ENCODE measurements at regions of chr1 and their contacts with region 1.

Region 1: DNA sequence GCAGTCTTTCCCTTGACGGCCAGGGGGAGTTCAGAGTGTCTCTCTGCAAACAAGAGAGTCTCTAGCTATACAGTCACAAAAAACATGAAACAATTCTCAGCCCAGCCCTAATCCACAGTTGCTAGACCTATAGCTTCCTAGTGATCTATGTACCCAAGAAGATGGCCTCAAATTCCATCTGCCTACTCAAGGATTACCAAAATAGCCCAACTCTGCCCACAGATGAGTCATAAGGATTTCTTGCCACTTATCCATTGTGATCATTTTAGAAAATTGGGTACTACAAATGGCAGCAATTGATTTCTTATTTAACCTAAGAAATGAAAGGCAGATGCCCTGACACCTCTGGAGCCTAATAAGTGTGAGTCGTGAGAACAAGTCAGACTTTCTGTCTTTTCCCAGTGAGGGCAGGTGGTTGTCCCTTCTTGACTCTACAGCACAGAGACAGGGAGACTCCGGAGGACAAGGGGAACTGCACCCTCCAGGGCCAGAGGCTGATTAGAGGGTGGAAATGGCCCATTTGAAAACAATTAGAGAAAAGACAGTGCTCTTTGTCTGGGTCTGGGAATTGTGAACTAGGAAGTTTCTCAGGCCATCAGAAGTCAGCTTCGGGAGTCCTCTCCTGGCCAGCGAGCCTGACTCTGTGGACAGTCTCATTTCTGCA is 65.4 kb downstream of the ABCA4 start:
- DNase-seq: no peak
- H3K4me3 ChIP-seq: no peak overlapping the region
- H3K27ac ChIP-seq: no peak overlapping the region
- H3K4me1 ChIP-seq: no peaks in the 10 kb centered on the region
- H3K27me3 ChIP-seq: no peaks in the 10 kb centered on the region
- CTCF ChIP-seq: no peak
- POLR2A ChIP-seq: no peak

Region 2: GRCh38 chr1:93967306-93967705 is 88.3 kb before region 1 on chr1:
- intact Hi-C with region 1: no loop called
- DNase-seq: no peak
- H3K4me3 ChIP-seq: no peak overlapping the region
- H3K27ac ChIP-seq: no peak overlapping the region
- H3K4me1 ChIP-seq: no peaks in the 10 kb centered on the region
- H3K27me3 ChIP-seq: no peaks in the 10 kb centered on the region
- CTCF ChIP-seq: no peak
- POLR2A ChIP-seq: no peak

Region 3: DNA sequence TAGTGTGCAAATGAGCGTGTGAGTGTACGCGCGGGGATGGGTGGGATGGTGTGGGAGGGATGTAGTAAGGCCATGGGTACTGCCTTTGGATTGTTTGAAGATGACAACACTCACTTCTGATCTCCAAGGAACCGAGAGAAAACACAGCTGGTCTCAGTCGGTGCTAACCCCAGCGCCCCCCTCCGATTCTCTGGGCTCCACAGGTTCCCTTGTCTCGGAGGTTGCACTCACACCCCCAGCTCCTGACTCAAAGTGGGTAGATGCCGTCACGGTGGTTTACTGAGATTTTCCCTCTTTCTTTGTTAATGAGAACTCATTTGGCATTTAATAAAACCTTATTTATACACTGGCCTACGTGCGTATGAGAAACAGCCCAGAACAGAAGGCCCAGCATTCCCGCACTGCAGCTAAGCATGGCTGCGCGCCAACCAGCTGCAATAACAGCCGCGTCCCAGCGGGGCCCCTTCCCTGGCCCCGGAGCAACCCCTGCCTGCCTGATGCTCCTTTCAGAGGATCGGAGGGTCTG is 39.6 kb after region 1 on chr1:
- intact Hi-C with region 1: no loop called
- DNase-seq: peak; percentile 34 to 68 (median 50)
- H3K4me3 ChIP-seq: no peak overlapping the region
- H3K27ac ChIP-seq: peak overlapping the region in 3 of 5 donors; percentile 58 to 84 (median 79)
- H3K4me1 ChIP-seq: peaks cover 30 to 61% of the 10 kb centered on the region in 2 donors
- H3K27me3 ChIP-seq: no peaks in the 10 kb centered on the region
- CTCF ChIP-seq: no peak
- POLR2A ChIP-seq: no peak

Region 4: DNA sequence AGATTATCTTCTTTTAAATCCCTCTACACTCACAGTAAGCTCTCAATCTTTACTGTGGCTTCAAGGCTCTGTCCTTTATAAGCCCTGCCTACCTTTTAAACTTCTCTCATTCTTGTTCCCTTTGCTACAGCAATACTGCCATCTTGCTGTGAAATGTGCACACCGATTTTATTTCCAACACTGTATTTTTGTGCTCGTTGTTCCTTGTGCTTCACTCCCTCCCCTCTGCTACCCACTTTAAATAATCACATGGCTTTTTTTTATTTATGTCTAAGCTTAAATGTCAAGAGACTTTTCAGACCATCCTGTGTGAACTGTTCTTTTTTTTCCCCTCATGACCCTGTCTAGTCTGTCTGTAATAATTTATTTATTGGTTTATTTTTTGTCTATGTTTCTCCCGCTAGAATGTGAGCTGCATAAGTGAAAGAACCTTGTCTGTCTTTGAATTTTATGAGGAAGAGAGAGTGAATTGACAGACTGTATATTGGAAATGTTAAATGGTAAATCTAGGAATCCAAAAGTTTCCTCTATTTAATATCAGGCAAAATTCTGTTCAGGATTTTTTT is 408.3 kb after region 1 on chr1:
- intact Hi-C with region 1: loop called in 1 of 2 experiments (anchors 10 kb)
- DNase-seq: peak in 5 of 7 donors; percentile 20 to 32 (median 20)
- H3K4me3 ChIP-seq: no peak overlapping the region
- H3K27ac ChIP-seq: peak overlapping the region in 2 of 5 donors; percentile 2 to 4
- H3K4me1 ChIP-seq: peaks cover 0 to 7% of the 10 kb centered on the region in 2 donors
- H3K27me3 ChIP-seq: no peaks in the 10 kb centered on the region
- CTCF ChIP-seq: peak; percentile 45 to 91 (median 68)
- POLR2A ChIP-seq: no peak